Esophagus muscularis mucosa (tissue), 4 donors: ENCODE measurements at regions of chr1 and their contacts with region 1.

Region 1: DNA sequence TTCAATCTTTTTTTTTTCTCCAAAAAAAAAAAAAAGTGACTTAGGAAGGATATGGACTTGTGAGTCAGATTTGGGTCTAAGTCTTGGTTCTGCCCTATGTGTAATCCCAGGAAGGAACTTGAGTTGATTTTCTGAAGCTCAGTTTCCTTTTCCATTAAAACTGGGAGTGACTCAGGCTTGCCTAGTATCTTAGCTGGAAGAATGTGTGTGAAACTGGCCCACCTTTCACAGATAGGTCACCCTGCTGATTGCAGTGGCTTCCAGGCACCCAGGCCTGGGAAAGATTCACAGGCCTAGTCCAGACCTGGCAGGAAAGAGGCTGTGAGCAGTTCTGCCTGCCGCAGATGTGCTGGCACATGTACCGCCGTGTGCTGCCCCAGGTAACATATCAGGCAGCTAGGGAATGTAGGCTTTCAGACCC is 218.3 kb upstream of the HOOK1 start:
- DNase-seq: no peak
- H3K4me3 ChIP-seq: no peak overlapping the region
- H3K27ac ChIP-seq: peak overlapping the region; percentile 82 to 89 (median 87)
- H3K4me1 ChIP-seq: peaks cover 21 to 66% (median 51%) of the 10 kb centered on the region in 4 donors
- H3K27me3 ChIP-seq: no peaks in the 10 kb centered on the region
- CTCF ChIP-seq: no peak
- EP300 ChIP-seq: no peak
- POLR2A ChIP-seq: no peak

Region 2: DNA sequence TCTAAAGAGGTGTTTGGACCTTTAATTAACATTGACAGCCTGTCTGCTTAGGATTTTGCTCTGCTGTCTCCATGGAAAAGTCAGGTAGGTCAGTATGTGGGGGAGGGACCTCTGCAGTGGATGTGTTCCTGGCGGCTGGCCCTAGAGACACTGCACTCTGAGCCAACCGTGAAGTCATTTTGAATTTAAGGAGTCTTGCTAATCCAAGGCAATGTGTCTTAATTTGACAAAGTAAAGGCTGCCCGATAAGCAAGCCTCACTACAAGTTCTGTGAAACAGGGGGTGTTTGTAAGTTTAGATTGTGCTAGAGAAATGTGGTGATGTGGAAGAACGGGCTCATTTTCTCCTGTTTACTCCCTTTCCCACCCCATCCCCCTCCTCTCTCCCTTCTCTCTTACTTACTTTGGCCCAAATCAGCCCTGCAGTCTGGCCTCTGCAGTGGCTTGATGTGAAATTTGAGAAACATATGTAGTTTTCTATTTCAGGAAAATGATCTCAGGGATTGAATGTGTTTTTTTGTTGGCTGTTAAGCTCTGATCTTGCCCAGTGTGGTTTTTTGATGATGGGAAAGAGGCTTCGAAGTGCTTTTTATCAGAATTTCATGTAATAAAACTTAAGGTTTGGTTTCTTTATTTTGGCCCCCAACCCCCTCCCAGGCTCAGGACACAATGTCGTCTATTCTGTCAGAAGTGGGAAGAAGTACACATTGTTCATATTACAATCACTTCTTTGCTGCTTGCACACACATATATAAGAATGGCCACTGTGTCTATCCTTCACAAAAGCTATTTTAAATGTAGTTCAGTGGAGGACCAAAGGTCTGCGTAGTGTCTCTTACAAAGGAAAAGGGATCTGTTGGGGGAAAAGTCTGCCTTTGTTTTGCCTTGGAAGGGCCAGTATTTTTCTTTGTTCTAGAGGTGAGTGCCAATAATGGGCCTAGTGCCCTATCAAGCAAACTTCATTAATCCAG is 203.0 kb before region 1 on chr1:
- intact Hi-C with region 1: loop called (anchors 5 kb)
- DNase-seq: peak; percentile 94
- H3K4me3 ChIP-seq: peak overlapping the region; percentile 2 to 23 (median 12)
- H3K27ac ChIP-seq: peak overlapping the region; percentile 84 to 91 (median 86)
- H3K4me1 ChIP-seq: peaks cover 23 to 56% (median 44%) of the 10 kb centered on the region in 4 donors
- H3K27me3 ChIP-seq: no peaks in the 10 kb centered on the region
- CTCF ChIP-seq: no peak
- EP300 ChIP-seq: no peak
- POLR2A ChIP-seq: no peak

Region 3: GRCh38 chr1:59682396-59683080 is 86.1 kb after region 1 on chr1:
- intact Hi-C with region 1: loop called (anchors 5 kb)
- DNase-seq: peak; percentile 91
- H3K4me3 ChIP-seq: no peak overlapping the region
- H3K27ac ChIP-seq: peak overlapping the region; percentile 83 to 90 (median 84)
- H3K4me1 ChIP-seq: peaks cover 13 to 72% (median 55%) of the 10 kb centered on the region in 4 donors
- H3K27me3 ChIP-seq: no peaks in the 10 kb centered on the region
- CTCF ChIP-seq: peak in 1 of 3 experiments; percentile 11
- EP300 ChIP-seq: peak; percentile 80
- POLR2A ChIP-seq: no peak